ENCODE measurements at regions of chr16 and their contacts with region 1.

Region 1: DNA sequence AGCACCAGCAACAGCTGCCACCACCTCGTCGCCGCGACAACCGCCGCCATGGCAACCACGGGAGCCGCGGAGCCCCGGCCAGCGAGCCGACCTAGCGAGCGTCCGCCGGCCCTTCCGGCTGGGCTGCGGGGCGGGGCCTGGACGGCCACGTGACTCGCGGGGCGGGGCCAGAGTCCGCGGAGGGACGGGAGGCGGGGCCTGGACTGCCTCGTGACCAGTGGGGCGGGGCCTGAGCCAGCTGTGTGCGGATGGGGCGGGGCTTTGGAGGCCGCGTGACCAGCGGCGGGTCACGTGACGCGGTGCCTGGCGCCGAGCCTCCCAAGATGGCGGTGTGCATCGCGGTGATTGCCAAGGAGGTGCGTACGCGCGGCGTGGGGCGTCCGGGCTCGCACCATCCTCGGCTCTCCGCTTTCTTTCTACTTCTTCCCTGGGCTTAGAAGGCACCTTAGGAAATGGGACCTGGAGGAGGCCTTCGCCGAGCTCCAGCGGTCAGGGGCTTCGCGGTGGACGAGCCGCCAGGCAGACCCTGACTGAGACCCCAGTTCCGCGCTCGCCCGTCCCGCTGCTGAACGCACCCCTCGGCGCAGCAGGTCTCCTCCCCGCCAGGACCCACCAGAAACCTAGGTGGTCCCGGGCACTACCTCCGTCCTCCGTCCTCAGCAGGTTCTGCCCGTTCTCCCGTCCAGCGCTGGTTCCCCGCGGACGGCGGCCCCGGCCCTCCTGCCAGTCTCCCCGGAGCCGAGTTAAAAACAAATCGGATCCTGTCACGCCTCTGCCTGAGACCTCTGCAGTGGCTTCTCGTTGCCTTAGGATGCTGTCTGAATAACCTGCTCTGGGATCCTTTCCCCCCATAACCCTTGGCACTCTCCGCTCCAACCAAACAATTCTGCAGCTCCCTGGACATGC is at the starts of genes GALNS and TRAPPC2L:
- DNase-seq: peak; percentile 98 to 100
- ATAC-seq: peak; percentile 98
- H3K4me3 ChIP-seq: peak within 1 kb of the TSS; percentile 22 to 76
- H3K27ac ChIP-seq: peak within 1 kb of the TSS in 1 of 2 donors; percentile 26
- H3K4me1 ChIP-seq: no peaks in the 10 kb centered on the region
- H3K27me3 ChIP-seq: no peaks in the 10 kb centered on the region
- total RNA-seq, gene GALNS: 29.5 to 44.1 TPM
- total RNA-seq, gene TRAPPC2L: 27.8 to 31.2 TPM

Region 2: DNA sequence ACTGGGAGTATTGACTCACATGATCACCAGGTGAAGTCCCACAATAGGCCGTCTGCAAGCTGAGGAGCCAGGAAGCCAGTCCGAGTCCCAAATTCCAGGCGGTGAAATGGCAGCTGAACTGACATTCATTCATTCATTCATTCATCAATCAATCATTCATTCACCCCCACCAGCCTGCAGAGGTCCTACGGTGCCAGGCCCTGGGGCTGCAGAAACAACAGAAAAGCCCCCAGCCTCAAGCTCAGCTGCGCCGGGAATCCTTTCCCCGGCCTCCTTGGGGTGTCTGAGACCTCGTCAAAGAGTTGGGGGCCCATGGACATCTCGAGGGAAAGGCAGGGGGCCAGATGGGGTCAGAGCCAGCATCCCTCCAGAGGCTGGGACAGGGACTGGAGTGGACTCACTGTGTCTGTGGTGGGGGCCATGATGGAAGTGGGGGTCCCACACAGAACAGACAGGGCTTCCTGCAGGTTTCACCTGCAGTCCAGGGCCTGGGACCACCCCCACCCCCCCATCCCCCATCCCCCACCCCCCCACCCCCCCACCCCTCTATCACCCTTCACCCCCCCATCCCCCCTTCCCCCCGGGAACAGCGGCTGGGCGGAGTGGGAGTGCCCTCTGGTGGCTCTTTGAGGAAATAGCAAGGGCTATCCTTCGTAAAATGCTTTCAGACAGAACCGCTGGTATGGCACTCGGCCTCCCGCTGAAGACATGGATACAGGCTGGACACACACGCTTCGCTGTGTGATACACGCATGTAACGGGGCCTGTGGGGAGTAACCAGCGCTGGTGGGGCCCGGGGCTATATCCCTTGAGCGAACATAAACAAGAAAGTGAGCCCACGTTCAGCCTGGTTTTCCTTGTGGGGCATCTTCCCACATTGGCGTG is 295.4 kb before region 1 on chr16:
- intact Hi-C with region 1: no loop called
- DNase-seq: peak in 1 of 2 donors; percentile 83
- ATAC-seq: peak; percentile 79
- H3K4me3 ChIP-seq: no peak overlapping the region
- H3K27ac ChIP-seq: no peak overlapping the region
- H3K4me1 ChIP-seq: no peaks in the 10 kb centered on the region
- H3K27me3 ChIP-seq: no peaks in the 10 kb centered on the region

Region 3: DNA sequence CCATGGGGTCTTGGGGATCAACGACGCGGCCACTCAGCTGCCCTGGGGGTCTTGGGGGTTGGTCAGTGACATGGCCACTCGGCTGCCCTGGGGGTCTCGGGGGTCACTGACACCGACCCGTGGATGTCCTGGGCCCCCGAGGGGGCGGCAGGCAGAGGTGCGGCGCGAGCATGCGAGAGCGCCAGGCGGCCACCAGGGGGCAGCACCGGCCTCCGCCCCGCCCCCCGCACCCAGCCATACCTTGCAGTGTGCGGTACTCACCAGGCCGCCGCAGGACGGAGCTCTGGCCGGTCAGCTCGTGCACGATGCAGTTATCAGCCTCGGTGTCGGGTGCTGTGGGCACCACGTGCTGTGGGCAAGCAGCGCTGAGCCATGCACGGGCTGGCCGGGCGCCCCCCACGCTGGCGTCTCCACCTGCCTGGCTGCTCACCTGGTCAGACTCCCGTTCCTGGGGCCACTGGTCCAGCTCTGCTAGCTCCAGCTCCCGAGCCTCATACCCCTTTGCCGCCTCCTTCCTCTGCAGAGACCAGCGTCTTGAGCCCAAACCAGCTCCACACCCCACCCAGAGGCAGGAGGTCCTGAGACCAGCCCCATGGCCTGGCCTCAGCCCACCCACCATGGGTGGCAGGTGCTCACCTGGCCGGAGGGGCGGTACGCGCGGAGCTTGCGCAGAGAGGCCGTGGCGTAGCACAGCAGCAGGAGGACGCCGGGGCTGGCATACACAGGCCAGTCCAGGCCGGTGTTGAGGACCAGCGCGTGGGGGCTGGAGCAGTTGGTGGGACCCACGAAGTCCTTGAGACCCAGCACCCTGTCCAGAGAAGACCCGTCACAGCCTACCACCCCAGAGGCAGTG is 119.6 kb before region 1 on chr16:
- intact Hi-C with region 1: loop called in 1 of 2 experiments (anchors 5 kb)
- DNase-seq: peak; percentile 75 to 90
- ATAC-seq: peak; percentile 71
- H3K4me3 ChIP-seq: no peak overlapping the region
- H3K27ac ChIP-seq: no peak overlapping the region
- H3K4me1 ChIP-seq: no peaks in the 10 kb centered on the region
- H3K27me3 ChIP-seq: no peaks in the 10 kb centered on the region

Region 4: GRCh38 chr16:88770461-88771293 is 86.4 kb before region 1 on chr16:
- intact Hi-C with region 1: no loop called
- DNase-seq: no peak
- ATAC-seq: no peak
- H3K4me3 ChIP-seq: no peak overlapping the region
- H3K27ac ChIP-seq: no peak overlapping the region
- H3K4me1 ChIP-seq: no peaks in the 10 kb centered on the region
- H3K27me3 ChIP-seq: no peaks in the 10 kb centered on the region

Region 5: GRCh38 chr16:88811769-88812512 is 45.1 kb before region 1 on chr16 and contains the start of gene APRT:
- intact Hi-C with region 1: loop called (anchors 1 to 5 kb)
- DNase-seq: peak; percentile 96 to 99
- ATAC-seq: peak; percentile 95
- H3K4me3 ChIP-seq: peak within 1 kb of the TSS; percentile 47 to 55
- H3K27ac ChIP-seq: peak within 1 kb of the TSS; percentile 64 to 81
- H3K4me1 ChIP-seq: no peaks in the 10 kb centered on the region
- H3K27me3 ChIP-seq: no peaks in the 10 kb centered on the region
- total RNA-seq, gene APRT: 60.2 to 61.3 TPM

Region 6: GRCh38 chr16:88905563-88905962 is 48.5 kb after region 1 on chr16:
- intact Hi-C with region 1: no loop called
- DNase-seq: no peak
- ATAC-seq: no peak
- H3K4me3 ChIP-seq: no peak overlapping the region
- H3K27ac ChIP-seq: no peak overlapping the region
- H3K4me1 ChIP-seq: no peaks in the 10 kb centered on the region
- H3K27me3 ChIP-seq: no peaks in the 10 kb centered on the region